PC-9 (cell line): ENCODE measurements at regions of chr20 and their contacts with region 1.

Region 1: GRCh38 chr20:44419131-44419844 is 56.4 kb upstream of the TTPAL start:
- DNase-seq: no peak
- H3K4me3 ChIP-seq: no peak overlapping the region
- H3K27ac ChIP-seq: no peak overlapping the region
- H3K4me1 ChIP-seq: peaks cover 6% of the 10 kb centered on the region
- H3K27me3 ChIP-seq: no peaks in the 10 kb centered on the region
- CTCF ChIP-seq: no peak

Region 2: GRCh38 chr20:44407402-44408184 is 11.7 kb before region 1 on chr20:
- CTCF ChIA-PET with region 1: interaction called, 10 read pairs
- POLR2A ChIA-PET with region 1: no interaction called
- intact Hi-C with region 1: no loop called
- DNase-seq: peak; percentile 96 to 99
- H3K4me3 ChIP-seq: peak overlapping the region; percentile 13; the same call in 1 of the 2 replicates
- H3K27ac ChIP-seq: peak overlapping the region; percentile 75
- H3K4me1 ChIP-seq: peaks cover 35% of the 10 kb centered on the region
- H3K27me3 ChIP-seq: no peaks in the 10 kb centered on the region
- CTCF ChIP-seq: no peak

Region 3: GRCh38 chr20:44618318-44618731 is 199.0 kb after region 1 on chr20:
- CTCF ChIA-PET with region 1: no interaction called
- POLR2A ChIA-PET with region 1: no interaction called
- intact Hi-C with region 1: no loop called
- DNase-seq: no peak
- H3K4me3 ChIP-seq: no peak overlapping the region
- H3K27ac ChIP-seq: no peak overlapping the region
- H3K4me1 ChIP-seq: no peaks in the 10 kb centered on the region
- H3K27me3 ChIP-seq: no peaks in the 10 kb centered on the region
- CTCF ChIP-seq: no peak